Spleen (tissue), 13 donors: ENCODE measurements at regions of chr1 and their contacts with region 1.

Region 1: GRCh38 chr1:109548321-109549267 is at the start of gene GNAI3:
- DNase-seq: peak; percentile 99
- H3K4me3 ChIP-seq: peak within 1 kb of the TSS; percentile 42 to 88 (median 77)
- H3K27ac ChIP-seq: peak within 1 kb of the TSS; percentile 96 to 99 (median 98)
- H3K4me1 ChIP-seq: peaks cover 34 to 76% (median 61%) of the 10 kb centered on the region in 6 donors
- H3K27me3 ChIP-seq: no peaks in the 10 kb centered on the region
- CTCF ChIP-seq: peak in 2 of 11 experiments; percentile 11 to 15
- POLR2A ChIP-seq: peak; percentile 75 to 95 (median 88)
- total RNA-seq, gene GNAI3: 7.4 to 11.4 (median 10.4) TPM

Region 2: DNA sequence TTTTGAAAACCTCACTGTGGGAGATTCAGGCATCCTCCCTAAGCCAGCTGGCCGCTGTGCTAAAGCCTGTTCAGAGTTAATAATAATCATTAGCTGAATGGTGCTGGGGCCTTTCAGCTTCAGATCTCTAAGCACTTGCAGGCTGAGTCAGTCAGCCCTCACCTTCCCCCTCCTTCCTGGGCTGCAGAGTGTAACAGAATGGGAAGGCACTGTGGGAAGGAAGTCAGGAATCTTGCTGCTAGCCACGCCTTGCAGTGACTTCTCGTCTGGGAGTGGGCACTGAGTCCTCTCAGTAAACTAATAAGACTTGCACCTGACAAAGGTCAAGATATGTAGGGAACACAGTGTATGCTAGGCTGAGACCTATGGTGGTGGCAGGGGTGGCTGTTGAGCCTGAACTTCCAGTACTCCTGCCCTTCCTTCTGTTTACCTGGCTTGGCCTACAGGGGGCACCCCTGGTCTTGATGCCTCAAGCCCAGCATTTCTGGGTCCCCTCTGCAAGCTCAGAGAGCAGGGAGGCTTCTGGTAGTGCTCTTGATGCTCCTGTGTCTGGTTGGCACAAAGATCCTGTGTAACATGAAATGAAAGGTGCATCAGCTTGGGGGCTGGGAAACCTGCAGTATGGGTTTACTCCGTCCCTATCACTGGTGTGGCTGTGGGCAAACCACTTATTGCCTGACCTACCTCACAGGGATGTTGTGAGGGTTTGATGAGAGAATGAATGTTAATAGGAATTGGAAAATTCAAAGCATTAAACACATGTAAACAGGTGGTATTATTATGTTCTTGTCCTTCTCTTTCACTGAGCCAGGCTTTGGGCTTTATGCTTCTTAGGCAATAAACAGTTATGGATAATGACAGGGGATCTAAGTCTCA is 48.7 kb before region 1 on chr1:
- intact Hi-C with region 1: no loop called
- DNase-seq: no peak
- H3K4me3 ChIP-seq: no peak overlapping the region
- H3K27ac ChIP-seq: peak overlapping the region in 5 of 8 donors; percentile 11 to 82 (median 55)
- H3K4me1 ChIP-seq: peaks cover 13 to 99% (median 78%) of the 10 kb centered on the region in 6 donors
- H3K27me3 ChIP-seq: no peaks in the 10 kb centered on the region
- CTCF ChIP-seq: peak in 9 of 11 experiments; percentile 13 to 55 (median 45)
- POLR2A ChIP-seq: no peak

Region 3: DNA sequence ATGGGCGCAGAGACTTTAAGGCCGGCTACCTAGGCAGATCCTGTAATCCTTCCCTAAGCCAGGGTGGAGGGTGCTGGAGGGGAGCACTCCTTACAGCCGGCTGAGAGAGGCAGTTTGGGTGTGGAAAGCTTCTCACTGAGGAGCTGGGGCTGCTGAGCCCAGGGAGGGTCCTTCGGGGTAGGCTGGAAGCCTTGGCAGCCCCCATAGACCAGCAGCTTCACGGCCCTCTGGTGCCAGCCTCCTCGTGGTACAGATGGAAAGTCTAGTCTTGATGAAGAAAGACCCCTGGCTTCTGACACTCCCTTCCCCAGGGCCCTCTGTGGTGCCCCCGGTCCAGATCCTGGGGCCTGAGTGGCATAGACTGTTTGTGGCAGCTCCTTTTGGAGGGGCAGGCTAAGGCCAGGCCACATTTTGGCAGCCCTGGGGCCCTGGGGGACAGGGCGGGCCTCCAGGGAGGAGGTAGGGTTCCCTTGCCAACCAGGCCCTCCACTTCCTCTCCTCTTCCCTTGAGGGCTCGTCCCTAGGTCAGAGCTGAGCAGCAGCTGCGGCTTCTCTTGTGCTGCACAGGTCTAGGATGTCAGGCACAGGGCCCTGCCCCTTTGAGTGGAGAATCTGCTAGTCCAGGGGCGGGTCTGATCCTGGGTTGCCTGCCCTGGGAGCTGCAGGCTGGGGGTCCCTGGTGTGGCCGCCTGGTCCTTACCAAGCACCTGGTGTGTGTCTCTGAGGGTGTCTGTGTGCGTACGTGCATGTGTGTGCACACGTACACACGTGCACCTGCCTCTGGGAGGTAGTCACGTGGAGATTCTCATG is 75.8 kb after region 1 on chr1:
- intact Hi-C with region 1: loop called (anchors 5 kb)
- DNase-seq: no peak
- H3K4me3 ChIP-seq: peak overlapping the region in 6 of 8 donors; percentile 7 to 73 (median 27)
- H3K27ac ChIP-seq: peak overlapping the region; percentile 13 to 98 (median 54)
- H3K4me1 ChIP-seq: peaks cover 30 to 65% (median 55%) of the 10 kb centered on the region in 6 donors
- H3K27me3 ChIP-seq: no peaks in the 10 kb centered on the region
- CTCF ChIP-seq: no peak
- POLR2A ChIP-seq: no peak

Region 4: GRCh38 chr1:109643385-109644230 is 95.0 kb after region 1 on chr1:
- intact Hi-C with region 1: loop called (anchors 5 kb)
- DNase-seq: peak; percentile 96
- H3K4me3 ChIP-seq: peak overlapping the region in 1 of 8 donors; percentile 19
- H3K27ac ChIP-seq: peak overlapping the region in 2 of 8 donors; percentile 28 to 36
- H3K4me1 ChIP-seq: peaks cover 6 to 22% (median 16%) of the 10 kb centered on the region in 6 donors
- H3K27me3 ChIP-seq: no peaks in the 10 kb centered on the region
- CTCF ChIP-seq: peak; percentile 73 to 96 (median 92)
- POLR2A ChIP-seq: no peak

Region 5: GRCh38 chr1:109718491-109718890 is 169.9 kb after region 1 on chr1:
- intact Hi-C with region 1: no loop called
- DNase-seq: no peak
- H3K4me3 ChIP-seq: no peak overlapping the region
- H3K27ac ChIP-seq: no peak overlapping the region
- H3K4me1 ChIP-seq: no peaks in the 10 kb centered on the region
- H3K27me3 ChIP-seq: no peaks in the 10 kb centered on the region
- CTCF ChIP-seq: no peak
- POLR2A ChIP-seq: no peak

Region 6: DNA sequence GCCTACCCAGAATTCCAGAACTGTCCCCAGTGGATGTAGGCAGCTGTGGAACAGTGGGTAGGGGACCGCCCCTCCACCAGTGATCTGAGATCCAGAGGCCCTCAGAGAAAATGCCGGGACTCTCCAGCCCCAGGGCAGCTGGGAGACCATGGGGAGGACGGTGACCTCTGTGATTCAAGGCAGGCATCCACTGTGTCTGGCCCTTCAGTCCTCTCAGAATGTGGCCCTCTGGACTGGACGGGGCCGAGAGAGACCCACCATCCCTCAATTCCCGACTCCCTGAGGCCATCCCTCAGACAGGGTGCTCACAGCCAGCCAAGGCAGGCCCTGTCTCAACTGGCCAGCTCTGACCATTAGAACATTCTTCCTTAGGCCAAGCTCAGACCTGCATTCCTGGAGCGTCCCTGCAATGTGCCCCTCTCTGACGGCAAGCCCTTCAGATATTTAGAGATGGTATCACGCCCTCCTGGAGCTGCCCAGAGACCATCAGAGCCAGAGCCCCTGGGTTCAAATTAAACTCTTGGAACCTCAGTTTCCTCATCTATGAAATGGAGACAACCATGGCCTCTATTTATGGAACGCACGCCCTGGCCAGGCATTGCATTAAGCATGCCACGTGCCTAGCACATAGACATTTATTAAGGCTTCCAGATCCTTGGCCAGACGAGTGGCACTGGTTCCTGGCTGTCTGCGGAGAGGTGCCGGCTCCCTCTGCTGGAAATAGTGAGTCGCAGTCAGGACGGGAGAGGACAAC is 224.7 kb after region 1 on chr1:
- intact Hi-C with region 1: loop called (anchors 5 kb)
- DNase-seq: peak; percentile 90
- H3K4me3 ChIP-seq: no peak overlapping the region
- H3K27ac ChIP-seq: no peak overlapping the region
- H3K4me1 ChIP-seq: peaks cover 0 to 27% (median 12%) of the 10 kb centered on the region in 6 donors
- H3K27me3 ChIP-seq: peaks cover 0 to 6% (median 0%) of the 10 kb centered on the region in 7 donors
- CTCF ChIP-seq: peak; percentile 76 to 92 (median 86)
- POLR2A ChIP-seq: no peak

Region 7: GRCh38 chr1:109984456-109985275 is 436.1 kb after region 1 on chr1 and contains the start of gene AHCYL1:
- intact Hi-C with region 1: loop called (anchors 10 kb)
- DNase-seq: peak; percentile 100
- H3K4me3 ChIP-seq: peak within 1 kb of the TSS; percentile 61 to 78 (median 68)
- H3K27ac ChIP-seq: peak within 1 kb of the TSS; percentile 91 to 96 (median 95)
- H3K4me1 ChIP-seq: peaks cover 19 to 71% (median 52%) of the 10 kb centered on the region in 6 donors
- H3K27me3 ChIP-seq: no peaks in the 10 kb centered on the region
- CTCF ChIP-seq: peak; percentile 98 to 100 (median 100)
- POLR2A ChIP-seq: peak; percentile 48 to 94 (median 87)
- total RNA-seq, gene AHCYL1: 47.1 to 65.3 (median 52.7) TPM